Tibial artery (tissue), 4 donors: ENCODE measurements at regions of chr16 and their contacts with region 1.

Region 1: DNA sequence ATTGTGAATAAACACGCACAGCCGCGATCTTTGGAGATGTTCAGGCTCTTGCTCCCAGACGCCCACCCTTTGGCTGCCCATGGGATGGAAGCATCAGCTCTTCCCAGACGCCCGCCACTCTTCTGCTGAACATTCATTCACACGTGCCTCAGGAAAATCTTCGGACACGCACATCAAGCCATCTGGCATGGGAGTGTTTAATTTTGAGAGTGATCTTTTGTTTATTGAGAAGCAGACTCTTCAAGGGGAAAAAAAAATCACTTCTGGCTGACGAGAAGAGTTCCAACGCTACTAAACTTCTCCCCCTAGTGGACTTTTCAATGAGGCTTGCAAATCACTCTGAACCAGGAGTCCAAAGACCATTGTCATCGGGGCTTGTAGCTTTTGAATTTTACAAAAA is 62.0 kb upstream of the NUDT7 start:
- DNase-seq: no peak
- H3K4me3 ChIP-seq: peak overlapping the region in 1 of 2 donors; percentile 17
- H3K27ac ChIP-seq: no peak overlapping the region
- H3K4me1 ChIP-seq: peaks cover 0 to 5% (median 2%) of the 10 kb centered on the region in 4 donors
- H3K27me3 ChIP-seq: no peaks in the 10 kb centered on the region
- CTCF ChIP-seq: peak; percentile 58 to 64

Region 2: DNA sequence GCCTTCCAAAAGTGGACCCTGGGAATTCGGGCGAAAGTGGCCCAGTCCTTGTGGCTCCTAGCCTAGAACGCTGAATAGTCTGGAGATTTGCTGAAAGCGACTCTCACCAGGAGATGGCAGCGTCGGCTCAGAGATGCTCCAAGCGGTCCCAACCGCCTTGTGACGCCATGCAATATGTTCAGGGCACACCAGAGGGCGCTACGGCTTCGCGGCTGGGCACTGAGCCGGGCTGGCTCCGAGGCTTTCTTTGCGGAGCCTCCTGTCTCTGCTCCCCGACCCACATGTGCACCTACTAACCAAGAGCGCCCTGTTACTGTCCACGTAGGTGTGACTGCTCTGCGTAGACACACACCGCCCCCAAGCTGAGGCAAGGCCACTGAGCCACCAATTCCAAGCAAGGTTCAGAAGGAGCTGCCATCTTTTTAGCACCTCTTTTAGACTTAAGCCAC is 424.2 kb before region 1 on chr16:
- intact Hi-C with region 1: loop called (anchors 10 kb)
- DNase-seq: peak; percentile 76 to 85
- H3K4me3 ChIP-seq: no peak overlapping the region
- H3K27ac ChIP-seq: no peak overlapping the region
- H3K4me1 ChIP-seq: no peaks in the 10 kb centered on the region
- H3K27me3 ChIP-seq: peaks cover 0 to 14% of the 10 kb centered on the region in 2 donors
- CTCF ChIP-seq: peak; percentile 98

Region 3: DNA sequence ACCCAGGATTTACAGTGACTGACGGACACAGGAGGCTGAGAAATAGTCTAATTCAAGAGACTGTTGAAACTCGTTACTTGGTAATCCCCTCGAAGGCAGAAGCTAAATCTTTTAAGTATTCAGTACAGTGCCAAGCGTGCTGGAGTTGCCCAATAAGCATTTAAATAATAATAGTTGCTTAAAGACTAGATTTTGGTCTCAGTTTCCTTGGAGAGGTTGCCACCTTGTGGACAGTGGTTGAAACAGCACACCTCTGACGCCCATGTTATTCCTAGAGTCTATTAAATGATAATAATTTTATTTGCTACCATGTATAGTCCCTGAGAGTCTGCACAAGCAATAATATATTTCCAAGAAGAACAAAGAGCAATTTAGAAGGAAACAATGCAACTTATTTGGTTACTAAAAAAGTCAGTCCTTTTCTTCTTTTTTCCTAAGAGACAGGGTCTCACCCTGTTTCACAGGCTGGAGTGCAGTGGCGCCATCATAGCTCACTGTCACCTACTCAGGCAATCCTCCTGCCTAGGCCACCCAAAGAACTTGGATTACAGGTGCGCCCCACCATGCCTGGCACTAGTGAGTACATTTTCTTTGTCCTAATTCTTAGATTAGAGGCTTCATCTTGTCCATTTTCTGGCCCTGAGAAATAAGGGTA is 76.0 kb before region 1 on chr16:
- intact Hi-C with region 1: no loop called
- DNase-seq: peak in 1 of 2 donors; percentile 33
- H3K4me3 ChIP-seq: no peak overlapping the region
- H3K27ac ChIP-seq: no peak overlapping the region
- H3K4me1 ChIP-seq: no peaks in the 10 kb centered on the region
- H3K27me3 ChIP-seq: peaks cover 0 to 9% of the 10 kb centered on the region in 2 donors
- CTCF ChIP-seq: peak; percentile 70 to 85

Region 4: GRCh38 chr16:77599793-77600415 is 60.4 kb before region 1 on chr16:
- intact Hi-C with region 1: loop called (anchors 5 kb)
- DNase-seq: no peak
- H3K4me3 ChIP-seq: no peak overlapping the region
- H3K27ac ChIP-seq: no peak overlapping the region
- H3K4me1 ChIP-seq: no peaks in the 10 kb centered on the region
- H3K27me3 ChIP-seq: no peaks in the 10 kb centered on the region
- CTCF ChIP-seq: peak; percentile 52 to 57

Region 5: DNA sequence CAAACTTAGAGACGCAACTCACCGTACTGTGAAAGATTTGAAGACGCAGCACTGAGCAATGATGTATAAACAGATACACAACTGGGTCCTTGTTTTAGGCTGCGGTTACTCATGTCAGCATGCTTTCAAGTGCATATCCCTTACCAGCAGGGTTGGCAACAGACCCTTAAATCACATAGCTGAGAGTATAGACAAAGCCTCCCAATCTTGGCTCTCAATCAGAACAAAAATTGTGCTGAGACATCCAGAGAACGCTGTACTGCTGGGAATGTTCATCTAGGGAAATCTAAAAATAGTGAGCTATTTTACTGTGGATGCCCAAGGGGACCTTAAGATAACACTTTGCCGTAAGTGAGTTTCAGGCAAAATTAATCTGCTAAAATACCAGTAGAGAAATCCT is 22.4 kb before region 1 on chr16:
- intact Hi-C with region 1: no loop called
- DNase-seq: no peak
- H3K4me3 ChIP-seq: peak overlapping the region; percentile 17 to 18
- H3K27ac ChIP-seq: peak overlapping the region; percentile 69 to 82
- H3K4me1 ChIP-seq: peaks cover 0 to 33% (median 12%) of the 10 kb centered on the region in 4 donors
- H3K27me3 ChIP-seq: no peaks in the 10 kb centered on the region
- CTCF ChIP-seq: no peak

Region 6: GRCh38 chr16:77696149-77696548 is 35.8 kb after region 1 on chr16:
- intact Hi-C with region 1: no loop called
- DNase-seq: no peak
- H3K4me3 ChIP-seq: no peak overlapping the region
- H3K27ac ChIP-seq: no peak overlapping the region
- H3K4me1 ChIP-seq: no peaks in the 10 kb centered on the region
- H3K27me3 ChIP-seq: no peaks in the 10 kb centered on the region
- CTCF ChIP-seq: no peak